ENCODE measurements at regions of chr4 and their contacts with region 1.

Region 1: DNA sequence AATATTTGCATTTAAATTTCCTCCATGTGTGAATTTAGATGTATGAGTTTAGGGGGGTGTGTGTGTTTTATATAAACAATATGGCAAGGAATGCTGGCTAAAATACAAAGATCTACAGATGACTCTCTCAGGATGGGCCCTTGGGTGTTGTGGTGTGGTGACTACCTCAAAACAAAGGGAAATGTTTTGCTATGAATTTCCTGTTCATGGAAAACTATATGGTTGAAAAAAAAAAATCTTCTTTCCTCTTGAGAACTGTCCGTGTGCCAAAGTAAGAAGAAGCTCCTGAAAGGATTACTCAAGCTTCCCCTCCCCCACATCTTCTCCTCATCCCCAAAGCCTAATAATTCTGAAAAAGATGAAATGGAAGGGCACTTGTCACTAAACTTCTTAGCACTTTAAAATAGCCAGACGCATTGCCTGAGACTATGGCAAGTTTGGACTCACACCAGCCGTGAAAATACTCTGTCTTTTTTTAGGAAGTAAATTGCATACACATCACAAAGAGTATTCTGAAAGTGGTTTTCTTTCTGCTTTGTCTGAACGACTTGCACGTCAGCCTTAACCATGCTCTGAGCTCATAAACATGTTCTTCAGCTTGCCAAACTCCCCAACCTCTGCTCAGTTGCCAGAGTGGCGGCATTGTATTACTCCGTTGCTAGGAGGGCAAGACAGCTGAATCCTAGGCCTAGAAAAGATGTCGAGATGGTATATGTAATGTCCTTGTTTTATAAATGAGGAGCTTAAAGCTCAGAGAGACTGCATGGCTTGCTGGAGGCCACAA is 250.4 kb upstream of the JADE1 start:
- DNase-seq: peak; percentile 77
- H3K4me3 ChIP-seq: no peak overlapping the region
- CTCF ChIP-seq: no peak

Region 2: DNA sequence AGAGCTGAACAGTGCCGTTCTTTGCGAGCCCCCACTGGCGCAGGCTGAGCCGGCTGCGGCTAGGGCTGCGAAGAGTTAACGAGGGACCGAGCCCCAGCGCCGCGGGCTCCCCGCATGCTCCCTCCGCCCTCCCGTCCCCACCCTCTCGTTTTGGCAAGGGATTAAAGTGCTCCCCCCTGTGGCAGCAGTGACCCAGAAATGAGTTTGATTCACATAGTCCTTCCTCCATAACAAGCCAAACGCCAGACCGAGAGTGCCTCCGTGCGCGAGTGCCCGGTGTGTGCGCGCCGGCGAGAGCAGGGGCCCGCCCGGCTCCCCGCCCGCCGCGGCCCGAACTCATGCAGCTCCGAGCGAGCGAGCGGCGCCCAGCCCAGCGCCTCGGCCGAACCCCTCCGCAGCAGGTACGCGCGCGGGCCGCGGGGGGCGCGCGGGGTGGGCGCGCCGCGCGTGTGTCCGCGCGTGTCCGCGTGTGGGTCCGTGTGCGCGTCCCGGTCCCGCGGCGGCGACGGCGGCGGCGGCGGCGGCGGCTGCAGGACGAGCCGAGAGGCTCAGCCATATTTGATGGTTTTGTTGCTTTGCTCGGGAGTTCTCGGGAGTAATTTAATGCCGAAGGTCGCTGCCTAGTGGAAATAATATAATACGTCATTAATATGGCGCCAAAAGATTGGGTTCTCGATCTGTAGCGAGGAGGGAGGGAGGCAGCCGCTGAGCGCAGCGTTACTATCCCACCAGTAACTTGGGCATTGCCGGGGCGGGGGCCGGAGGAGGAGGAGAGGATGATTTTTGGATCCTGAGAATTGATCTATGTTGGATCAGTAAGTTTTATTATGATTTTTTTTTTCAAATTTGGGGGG is 250.6 kb after region 1 on chr4 and contains the start of gene JADE1:
- in situ Hi-C with region 1: loop called (anchors 10 kb)
- DNase-seq: peak; percentile 93
- H3K4me3 ChIP-seq: peak within 1 kb of the TSS; percentile 67
- CTCF ChIP-seq: peak; percentile 43